ENCODE measurements at regions of chr6 and their contacts with region 1.

Region 1: DNA sequence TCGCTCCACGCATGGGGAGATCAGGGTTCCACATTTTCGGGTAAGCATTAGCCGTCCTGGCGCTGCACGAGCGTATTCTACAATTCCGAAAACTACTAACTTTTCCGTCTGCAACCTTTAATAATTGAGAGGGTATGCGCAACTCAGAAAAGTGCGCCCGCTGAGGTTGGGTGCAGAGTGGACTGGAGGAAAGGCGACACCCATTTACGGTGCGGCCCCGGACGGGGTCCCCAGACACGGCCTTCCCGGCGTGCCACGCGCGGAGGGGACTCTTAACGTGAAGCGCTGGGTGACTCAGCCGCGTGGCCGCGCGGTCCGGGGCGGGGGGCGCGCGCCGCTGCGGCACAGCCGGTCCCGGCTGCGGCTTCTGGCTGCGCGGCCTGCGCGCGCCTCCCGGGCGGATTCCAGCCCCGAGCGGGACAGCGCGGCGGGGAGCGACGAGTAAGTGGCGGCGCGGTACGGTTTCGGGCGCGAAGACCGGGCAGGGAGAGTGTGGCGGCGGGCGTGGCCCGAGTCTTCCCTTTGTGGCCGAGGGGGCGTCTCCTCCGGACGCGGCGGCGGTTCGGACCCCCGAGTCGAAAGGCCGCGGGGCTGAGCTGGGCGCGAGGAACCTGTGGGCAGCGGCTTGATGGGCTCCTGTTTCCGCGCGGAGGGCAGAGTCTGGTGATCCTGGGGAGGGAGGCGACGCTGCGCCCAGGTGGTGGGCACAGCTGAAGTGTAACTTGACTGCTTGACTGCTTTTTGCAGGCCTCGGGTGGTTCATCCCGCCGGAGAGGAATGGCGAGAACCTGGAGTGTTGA is at the starts of genes KCTD20 and PXT1:
- DNase-seq: peak; percentile 81
- H3K4me3 ChIP-seq: peak within 1 kb of the TSS; percentile 84 to 93
- H3K27ac ChIP-seq: peak within 1 kb of the TSS; percentile 97
- H3K4me1 ChIP-seq: peaks cover 3% of the 10 kb centered on the region
- H3K27me3 ChIP-seq: no peaks in the 10 kb centered on the region
- CTCF ChIP-seq: peak in 1 of 4 experiments; percentile 15
- POLR2A ChIP-seq: peak; percentile 72
- total RNA-seq, gene KCTD20: 33.7 to 44.1 TPM
- total RNA-seq, gene PXT1: 6.3 TPM in 1 of 2 donors, not detected in the other

Region 2: DNA sequence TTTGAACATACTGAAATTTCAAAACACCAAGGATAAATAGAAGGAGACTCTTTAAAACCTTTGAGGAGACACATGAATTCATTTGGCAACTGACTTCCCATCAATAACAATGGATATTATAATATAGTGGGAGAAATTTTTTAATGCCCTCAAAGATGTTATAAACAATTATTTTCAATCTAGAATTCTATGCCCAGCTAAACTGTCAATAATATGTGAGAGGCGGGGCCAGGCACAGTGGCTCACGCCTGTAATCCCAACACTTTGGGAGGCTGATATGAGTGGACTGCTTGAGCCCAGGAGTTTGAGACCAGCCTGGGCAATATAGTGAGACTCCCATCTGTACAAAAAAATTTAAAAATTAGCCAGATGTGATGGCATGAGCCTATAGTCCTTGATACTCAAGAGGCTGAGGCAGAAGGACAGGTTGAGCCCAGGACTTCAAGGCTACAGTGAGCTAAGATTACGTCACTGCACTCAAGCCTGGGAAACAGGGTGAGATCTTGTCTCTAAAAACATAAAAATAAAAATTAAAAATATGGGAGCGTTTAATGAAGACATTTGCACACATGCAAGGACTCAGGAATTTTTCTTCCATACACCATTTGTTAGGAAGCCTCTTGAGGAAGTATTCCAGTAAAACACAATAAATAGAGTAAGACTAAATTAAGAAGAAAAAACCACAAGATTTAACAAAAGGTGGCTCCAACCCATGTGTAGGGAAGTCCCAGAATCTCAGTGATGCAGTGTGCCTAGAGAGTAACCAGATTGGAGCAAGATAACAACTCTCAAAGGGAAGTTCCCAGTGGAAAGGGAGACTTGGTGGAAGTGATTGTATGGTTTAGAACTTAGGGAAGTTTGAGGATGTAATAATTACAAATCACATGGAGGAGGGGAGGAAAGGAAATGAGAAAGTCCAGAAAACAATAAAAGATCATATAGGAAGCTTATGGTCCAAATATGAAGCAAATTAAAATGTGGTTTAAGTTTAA is 29.1 kb before region 1 on chr6:
- intact Hi-C with region 1: no loop called
- DNase-seq: no peak
- H3K4me3 ChIP-seq: no peak overlapping the region
- H3K27ac ChIP-seq: no peak overlapping the region
- H3K4me1 ChIP-seq: no peaks in the 10 kb centered on the region
- H3K27me3 ChIP-seq: no peaks in the 10 kb centered on the region
- CTCF ChIP-seq: no peak
- POLR2A ChIP-seq: no peak

Region 3: GRCh38 chr6:36594029-36594815 is 151.4 kb after region 1 on chr6 and contains the start of gene SRSF3:
- intact Hi-C with region 1: loop called (anchors 5 kb)
- DNase-seq: peak; percentile 98
- H3K4me3 ChIP-seq: peak within 1 kb of the TSS; percentile 65 to 74
- H3K27ac ChIP-seq: peak within 1 kb of the TSS; percentile 98 to 99
- H3K4me1 ChIP-seq: no peaks in the 10 kb centered on the region
- H3K27me3 ChIP-seq: no peaks in the 10 kb centered on the region
- CTCF ChIP-seq: peak; percentile 46 to 89 (median 64)
- POLR2A ChIP-seq: peak; percentile 97
- total RNA-seq, gene SRSF3: 111 to 153 TPM

Region 4: DNA sequence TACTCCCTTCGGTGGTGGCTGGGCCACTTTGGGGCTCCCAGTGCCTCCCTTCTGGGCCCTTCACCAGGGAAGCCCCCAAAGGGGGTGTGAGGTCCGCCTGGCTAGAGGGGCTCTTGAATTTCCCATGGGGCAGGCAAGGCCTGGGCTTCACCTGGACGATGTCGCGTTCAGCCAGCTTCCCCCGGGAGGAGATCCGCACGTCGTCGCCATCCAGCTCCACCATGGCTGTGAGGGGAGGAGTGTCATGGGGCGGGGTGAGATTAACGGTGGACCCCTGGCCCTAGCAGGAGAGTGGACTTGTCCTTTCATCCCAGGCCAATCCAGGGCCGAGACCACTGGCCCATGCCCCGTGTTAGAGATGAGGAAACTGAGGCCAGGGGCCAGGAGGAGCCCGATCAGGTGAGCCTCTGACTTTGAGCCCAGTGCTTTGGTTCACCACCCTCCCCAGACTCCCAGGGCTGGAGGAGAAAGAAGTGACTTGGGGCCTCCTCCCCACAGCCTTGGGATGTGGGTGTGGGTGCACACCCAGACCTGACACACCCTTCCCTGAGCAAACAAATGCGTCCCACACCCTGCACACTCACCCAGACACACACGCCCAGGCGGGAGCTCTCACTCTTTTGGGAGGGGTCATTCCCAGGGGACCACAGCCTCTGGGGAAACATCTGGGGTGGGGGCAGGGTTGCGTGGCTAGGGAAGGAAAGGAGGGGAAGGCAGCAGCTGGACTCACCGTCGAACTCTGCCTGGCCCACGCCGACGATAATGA is 300.9 kb after region 1 on chr6:
- intact Hi-C with region 1: no loop called
- DNase-seq: no peak
- H3K4me3 ChIP-seq: no peak overlapping the region
- H3K27ac ChIP-seq: no peak overlapping the region
- H3K4me1 ChIP-seq: no peaks in the 10 kb centered on the region
- H3K27me3 ChIP-seq: no peaks in the 10 kb centered on the region
- CTCF ChIP-seq: no peak
- POLR2A ChIP-seq: no peak